Heart left ventricle (tissue), 16 donors: ENCODE measurements at regions of chr10 and their contacts with region 1.

Region 1: DNA sequence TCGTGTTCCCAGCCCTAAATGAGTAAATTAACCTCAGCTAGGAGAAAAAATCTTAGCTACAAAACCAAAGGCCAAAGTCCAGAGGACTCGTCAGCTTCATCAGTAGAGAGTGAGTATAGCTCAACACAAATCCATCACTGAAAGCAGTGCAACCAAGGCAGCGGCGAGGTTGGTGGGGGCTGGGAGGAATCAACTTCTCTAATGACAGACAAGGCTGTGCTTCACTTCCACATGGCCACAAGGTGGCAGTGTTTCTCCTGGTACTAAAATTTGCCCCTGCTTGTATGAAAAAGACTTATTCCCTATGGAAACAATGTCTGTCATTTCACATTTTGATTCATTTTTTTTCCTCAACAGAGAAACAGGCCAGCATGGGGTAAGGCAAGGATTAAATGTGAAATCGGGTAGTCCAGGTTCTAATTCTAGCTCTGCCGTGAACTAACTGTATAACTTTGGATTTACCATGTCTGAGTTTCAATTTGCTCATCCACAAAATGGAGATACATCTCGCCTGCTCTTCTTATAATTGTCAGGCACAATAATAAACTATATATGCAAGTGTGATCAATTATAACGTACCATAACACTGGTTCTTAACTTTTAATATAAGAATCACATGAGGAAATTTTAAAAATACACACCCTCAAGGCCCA is 39.3 kb downstream of the FAS start:
- DNase-seq: peak; percentile 79 to 83 (median 80)
- ATAC-seq: peak in 3 of 4 donors; percentile 64 to 76 (median 71)
- H3K4me3 ChIP-seq: peak overlapping the region in 1 of 12 donors; percentile 21
- H3K27ac ChIP-seq: peak overlapping the region in 2 of 12 donors; percentile 9 to 27
- H3K4me1 ChIP-seq: peaks cover 0 to 35% (median 8%) of the 10 kb centered on the region in 12 donors
- H3K27me3 ChIP-seq: no peaks in the 10 kb centered on the region
- CTCF ChIP-seq: peak; percentile 87 to 97 (median 94)
- POLR2A ChIP-seq: no peak

Region 2: GRCh38 chr10:88990384-88991160 is 39.3 kb before region 1 on chr10 and contains the start of gene FAS:
- intact Hi-C with region 1: no loop called
- DNase-seq: peak; percentile 73 to 86 (median 78)
- ATAC-seq: peak; percentile 54 to 87 (median 80)
- H3K4me3 ChIP-seq: peak within 1 kb of the TSS; percentile 54 to 96 (median 84)
- H3K27ac ChIP-seq: peak within 1 kb of the TSS; percentile 87 to 99 (median 96)
- H3K4me1 ChIP-seq: peaks cover 0 to 79% (median 13%) of the 10 kb centered on the region in 12 donors
- H3K27me3 ChIP-seq: no peaks in the 10 kb centered on the region
- CTCF ChIP-seq: no peak
- POLR2A ChIP-seq: no peak
- total RNA-seq, gene FAS: 2.6 to 15.6 (median 5.1) TPM

Region 3: GRCh38 chr10:89074120-89074519 is 44.2 kb after region 1 on chr10:
- intact Hi-C with region 1: loop called in 1 of 10 experiments (anchors 5 kb)
- DNase-seq: peak; percentile 38 to 74 (median 54)
- ATAC-seq: peak; percentile 61 to 94 (median 72)
- H3K4me3 ChIP-seq: no peak overlapping the region
- H3K27ac ChIP-seq: peak overlapping the region; percentile 1 to 75 (median 53)
- H3K4me1 ChIP-seq: peaks cover 0 to 26% (median 9%) of the 10 kb centered on the region in 12 donors
- H3K27me3 ChIP-seq: no peaks in the 10 kb centered on the region
- CTCF ChIP-seq: no peak
- POLR2A ChIP-seq: no peak

Region 4: DNA sequence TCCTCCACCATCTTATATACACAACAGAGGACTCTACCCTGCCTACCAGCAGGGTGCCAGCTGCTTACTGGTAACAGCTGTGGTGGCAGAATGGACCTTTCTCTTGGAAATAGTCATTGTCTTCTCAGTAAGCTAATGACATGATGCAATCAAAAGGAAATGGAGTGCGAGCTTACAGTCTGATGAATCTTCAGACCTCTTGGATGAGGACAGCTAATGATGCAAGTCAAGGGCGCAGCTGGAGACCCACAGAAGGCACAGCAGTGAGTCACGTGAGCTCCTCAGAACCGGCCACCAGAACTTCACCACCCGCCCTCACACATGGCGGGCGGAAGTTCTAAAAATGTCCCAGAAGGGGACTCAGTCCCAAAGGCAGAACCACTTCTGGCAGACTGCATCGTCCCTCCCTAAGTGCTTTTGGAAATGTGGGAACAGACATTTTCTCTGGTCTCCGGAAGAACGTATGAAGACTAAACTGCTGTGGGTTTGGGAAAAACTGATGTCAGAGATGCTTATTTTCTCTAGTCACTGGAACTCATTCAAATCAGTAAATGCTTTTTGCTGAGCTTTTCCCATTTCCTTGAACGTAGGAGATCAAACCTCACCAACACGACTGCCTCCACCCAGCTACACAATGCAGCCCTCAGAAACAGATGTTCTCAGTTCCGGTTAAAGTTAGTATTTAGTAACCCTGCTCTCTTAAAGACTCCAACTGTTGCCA is 57.0 kb after region 1 on chr10:
- intact Hi-C with region 1: loop called in 1 of 10 experiments (anchors 5 kb)
- DNase-seq: peak; percentile 74 to 89 (median 85)
- ATAC-seq: peak; percentile 92 to 95 (median 93)
- H3K4me3 ChIP-seq: peak overlapping the region in 8 of 12 donors; percentile 13 to 42 (median 29)
- H3K27ac ChIP-seq: peak overlapping the region; percentile 62 to 92 (median 83)
- H3K4me1 ChIP-seq: peaks cover 3 to 67% (median 20%) of the 10 kb centered on the region in 12 donors
- H3K27me3 ChIP-seq: no peaks in the 10 kb centered on the region
- CTCF ChIP-seq: no peak
- POLR2A ChIP-seq: peak in 1 of 2 donors; percentile 16

Region 5: GRCh38 chr10:89115876-89116627 is 86.1 kb after region 1 on chr10:
- intact Hi-C with region 1: no loop called
- DNase-seq: no peak
- ATAC-seq: peak in 3 of 4 donors; percentile 32 to 60 (median 38)
- H3K4me3 ChIP-seq: no peak overlapping the region
- H3K27ac ChIP-seq: peak overlapping the region in 3 of 12 donors; percentile 27 to 58 (median 31)
- H3K4me1 ChIP-seq: peaks cover 0 to 25% (median 0%) of the 10 kb centered on the region in 12 donors
- H3K27me3 ChIP-seq: no peaks in the 10 kb centered on the region
- CTCF ChIP-seq: no peak
- POLR2A ChIP-seq: no peak